Breast epithelium (tissue), 4 donors: ENCODE measurements at regions of chr9 and their contacts with region 1.

Region 1: GRCh38 chr9:91407580-91408318 is 15.9 kb downstream of the NFIL3 start:
- DNase-seq: no peak
- H3K4me3 ChIP-seq: no peak overlapping the region
- H3K27ac ChIP-seq: no peak overlapping the region
- H3K4me1 ChIP-seq: no peaks in the 10 kb centered on the region
- H3K27me3 ChIP-seq: no peaks in the 10 kb centered on the region
- CTCF ChIP-seq: no peak
- POLR2A ChIP-seq: no peak

Region 2: GRCh38 chr9:91361291-91362050 is 46.3 kb before region 1 on chr9 and contains the start of gene AUH:
- intact Hi-C with region 1: no loop called
- DNase-seq: peak; percentile 67 to 86
- H3K4me3 ChIP-seq: peak within 1 kb of the TSS; percentile 87 to 97 (median 95)
- H3K27ac ChIP-seq: peak within 1 kb of the TSS; percentile 94 to 95
- H3K4me1 ChIP-seq: no peaks in the 10 kb centered on the region
- H3K27me3 ChIP-seq: no peaks in the 10 kb centered on the region
- CTCF ChIP-seq: peak in 1 of 3 donors; percentile 14
- POLR2A ChIP-seq: no peak
- total RNA-seq, gene AUH: 34.2 to 64.4 (median 50.8) TPM

Region 3: GRCh38 chr9:91395553-91396471 is 11.9 kb before region 1 on chr9:
- intact Hi-C with region 1: no loop called
- DNase-seq: no peak
- H3K4me3 ChIP-seq: no peak overlapping the region
- H3K27ac ChIP-seq: no peak overlapping the region
- H3K4me1 ChIP-seq: no peaks in the 10 kb centered on the region
- H3K27me3 ChIP-seq: no peaks in the 10 kb centered on the region
- CTCF ChIP-seq: no peak
- POLR2A ChIP-seq: no peak

Region 4: DNA sequence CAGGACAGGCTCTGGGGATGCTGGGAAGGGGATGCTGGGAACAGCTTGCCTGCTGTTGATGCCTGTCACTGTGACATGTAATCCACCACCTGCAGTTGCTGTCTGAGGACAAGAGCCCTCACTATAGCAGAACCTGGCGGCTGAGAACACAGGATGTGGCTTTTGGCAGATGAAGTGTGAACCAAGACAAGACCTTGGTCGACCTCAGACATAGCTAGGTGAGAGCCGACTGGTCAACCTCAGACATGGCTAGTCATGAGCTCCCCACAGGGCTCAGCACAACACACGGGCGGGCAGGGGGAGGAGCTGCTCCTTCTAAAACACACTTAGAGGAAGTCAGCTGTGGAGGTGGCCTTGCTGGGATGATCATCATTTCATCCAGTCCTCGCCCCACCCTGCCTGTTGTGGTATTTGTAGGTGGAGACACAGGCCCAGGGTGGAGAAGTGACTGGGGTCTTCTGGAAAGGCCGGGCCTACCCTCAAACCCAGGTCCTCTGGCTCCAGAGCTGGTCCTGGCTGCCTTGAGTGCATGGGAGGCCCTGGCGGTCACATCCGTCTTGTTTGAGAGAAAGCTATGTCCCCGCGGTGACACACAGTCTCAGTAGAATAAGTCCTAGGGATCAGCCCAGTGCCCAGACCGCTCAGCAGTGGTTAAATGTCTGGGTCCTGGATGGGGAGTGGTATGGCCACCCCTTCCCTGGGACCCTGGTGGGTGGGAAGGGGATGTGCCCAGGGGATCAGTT is 1656.8 kb after region 1 on chr9:
- intact Hi-C with region 1: loop called (anchors 10 kb)
- DNase-seq: peak in 1 of 2 donors; percentile 34
- H3K4me3 ChIP-seq: no peak overlapping the region
- H3K27ac ChIP-seq: peak overlapping the region in 1 of 2 donors; percentile 71
- H3K4me1 ChIP-seq: peaks cover 0 to 4% of the 10 kb centered on the region in 2 donors
- H3K27me3 ChIP-seq: no peaks in the 10 kb centered on the region
- CTCF ChIP-seq: no peak
- POLR2A ChIP-seq: no peak